ENCODE measurements at regions of chr3 and their contacts with region 1.

Region 1: GRCh38 chr3:40179016-40179415 is 130.5 kb upstream of the EIF1B start:
- DNase-seq: peak in 1 of 2 experiments; percentile 86
- H3K4me3 ChIP-seq: no peak overlapping the region
- H3K27ac ChIP-seq: no peak overlapping the region
- H3K4me1 ChIP-seq: 0 out of 7 replicates have a peak, but pooled peaks cover 0 to 2% (median 0%) of the 10 kb centered on the region in 4 experiments
- H3K27me3 ChIP-seq: no peaks in the 10 kb centered on the region; a peak in 1 of 7 replicates
- CTCF ChIP-seq: peak; percentile 50 to 78 (median 75)
- EP300 ChIP-seq: no peak
- POLR2A ChIP-seq: no peak
- RAD21 ChIP-seq: peak; percentile 80 to 83

Region 2: DNA sequence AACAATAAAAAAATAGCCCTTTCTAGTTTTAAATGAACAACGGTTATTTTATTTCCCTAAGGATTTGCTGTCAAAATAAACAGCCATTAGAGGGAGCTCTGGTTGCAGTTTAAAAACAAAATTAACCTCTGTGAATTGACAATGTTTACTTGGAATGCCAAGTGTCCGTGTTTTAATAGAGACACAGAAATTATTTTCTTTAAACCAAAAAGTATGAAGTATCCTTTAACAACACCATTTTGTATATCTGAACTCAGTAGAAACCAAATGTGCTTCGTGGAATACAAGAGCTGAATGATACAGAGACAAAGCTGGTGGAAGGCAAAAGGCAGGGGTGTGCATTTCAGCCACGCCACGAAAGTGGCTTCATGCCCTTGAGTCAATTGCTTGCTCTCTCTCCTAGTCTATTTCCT is 637.1 kb before region 1 on chr3:
- CTCF ChIA-PET with region 1: interaction called, 16 read pairs
- POLR2A ChIA-PET with region 1: no interaction called
- DNase-seq: no peak
- H3K4me3 ChIP-seq: no peak overlapping the region
- H3K27ac ChIP-seq: no peak overlapping the region
- H3K4me1 ChIP-seq: peaks cover 0 to 3% (median 1%) of the 10 kb centered on the region in 4 experiments; a peak in 3 of 7 replicates
- H3K27me3 ChIP-seq: no peaks in the 10 kb centered on the region
- CTCF ChIP-seq: peak in 2 of 3 experiments; percentile 40 to 48; a peak in 2 of 4 replicates
- EP300 ChIP-seq: no peak
- POLR2A ChIP-seq: no peak
- RAD21 ChIP-seq: peak; percentile 71 to 74

Region 3: DNA sequence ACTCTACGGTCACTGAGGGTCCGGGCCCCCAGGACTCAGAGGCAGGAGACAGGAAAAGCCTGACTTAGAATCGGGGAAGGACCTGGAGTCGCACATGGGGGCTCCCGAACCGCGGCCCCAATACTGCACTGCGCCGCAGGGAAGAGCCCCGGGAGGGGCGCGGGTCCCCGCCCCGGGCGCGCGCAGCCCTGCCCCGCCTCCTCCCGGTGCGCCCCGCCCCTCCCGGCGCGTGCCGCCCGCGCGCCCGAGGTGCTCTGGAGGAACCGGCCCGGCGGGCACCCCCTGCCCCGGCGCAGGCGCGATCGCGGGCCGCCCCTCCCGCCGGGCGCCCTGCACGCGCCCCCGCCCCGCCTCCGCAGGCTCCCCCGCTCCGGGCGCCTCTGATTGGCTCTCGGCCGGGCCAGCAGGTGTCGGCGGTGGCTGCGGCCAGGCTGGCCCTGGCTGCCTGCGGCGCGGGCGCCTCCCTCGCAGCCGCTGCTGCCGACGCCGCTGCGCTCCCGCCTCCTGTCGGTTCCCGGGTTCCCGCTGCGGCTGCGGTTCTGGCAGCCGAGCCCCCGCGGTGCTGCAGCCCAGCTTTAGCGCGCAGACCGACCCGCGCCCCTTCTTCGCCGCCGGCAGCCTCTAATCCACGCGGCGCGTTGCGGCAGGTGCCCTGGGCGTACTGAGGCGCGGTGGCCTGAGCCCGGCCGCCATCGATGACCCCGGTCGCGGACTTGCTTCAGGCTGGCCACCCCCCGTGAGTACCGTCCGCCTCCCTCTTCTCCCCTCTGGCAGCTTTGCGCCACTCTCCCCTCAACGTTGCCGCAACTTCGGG is 369.6 kb before region 1 on chr3 and contains the start of gene MYRIP:
- CTCF ChIA-PET with region 1: interaction called, 39 read pairs
- POLR2A ChIA-PET with region 1: no interaction called
- DNase-seq: peak in 1 of 2 experiments; percentile 78
- H3K4me3 ChIP-seq: peak within 1 kb of the TSS; percentile 57 to 70 (median 66)
- H3K27ac ChIP-seq: no peak within 1 kb of the TSS
- H3K4me1 ChIP-seq: peaks cover 0 to 3% (median 1%) of the 10 kb centered on the region in 4 experiments; a peak in 3 of 7 replicates
- H3K27me3 ChIP-seq: peaks cover 8 to 42% (median 30%) of the 10 kb centered on the region in 4 experiments
- CTCF ChIP-seq: no peak
- EP300 ChIP-seq: peak in 1 of 2 experiments; percentile 9; a peak in 1 of 3 replicates
- POLR2A ChIP-seq: no peak
- RAD21 ChIP-seq: no peak
- total RNA-seq, gene MYRIP: 3.4 and 4.3 TPM in 2 replicates

Region 4: DNA sequence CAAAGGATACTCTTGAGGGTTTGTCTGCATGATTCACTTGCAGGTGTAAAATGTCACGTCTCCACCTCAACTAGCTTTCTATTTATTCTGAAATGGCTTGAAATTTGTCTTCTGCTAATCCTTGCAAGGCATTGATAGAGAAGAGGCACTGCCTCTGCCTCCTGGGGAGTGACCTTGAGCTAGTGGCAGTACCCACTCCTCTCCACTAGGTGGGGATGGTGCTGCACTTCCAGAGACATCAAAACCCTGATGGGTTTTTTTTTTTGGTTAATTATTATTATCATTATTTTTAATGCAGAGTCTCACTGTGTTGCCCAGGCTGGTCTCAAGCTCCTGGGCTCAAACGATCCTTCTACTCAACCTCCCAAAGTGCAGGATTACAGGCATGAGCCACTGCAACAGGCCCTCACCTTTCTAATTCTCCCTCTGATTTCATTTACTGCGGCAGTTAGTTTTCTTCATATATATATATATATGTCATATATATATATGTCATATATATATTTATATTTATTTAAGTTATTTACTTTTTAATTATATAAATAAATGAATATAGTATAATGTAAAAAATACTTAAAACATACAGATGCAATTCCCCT is 12.9 kb after region 1 on chr3:
- CTCF ChIA-PET with region 1: interaction called, 114 read pairs
- POLR2A ChIA-PET with region 1: interaction called, 3 read pairs
- DNase-seq: peak in 1 of 2 experiments; percentile 86
- H3K4me3 ChIP-seq: no peak overlapping the region
- H3K27ac ChIP-seq: no peak overlapping the region
- H3K4me1 ChIP-seq: peaks cover 0 to 7% (median 6%) of the 10 kb centered on the region in 4 experiments; a peak in 4 of 7 replicates
- H3K27me3 ChIP-seq: no peaks in the 10 kb centered on the region
- CTCF ChIP-seq: peak; percentile 81 to 85 (median 83)
- EP300 ChIP-seq: no peak
- POLR2A ChIP-seq: no peak
- RAD21 ChIP-seq: peak; percentile 88 to 90

Region 5: DNA sequence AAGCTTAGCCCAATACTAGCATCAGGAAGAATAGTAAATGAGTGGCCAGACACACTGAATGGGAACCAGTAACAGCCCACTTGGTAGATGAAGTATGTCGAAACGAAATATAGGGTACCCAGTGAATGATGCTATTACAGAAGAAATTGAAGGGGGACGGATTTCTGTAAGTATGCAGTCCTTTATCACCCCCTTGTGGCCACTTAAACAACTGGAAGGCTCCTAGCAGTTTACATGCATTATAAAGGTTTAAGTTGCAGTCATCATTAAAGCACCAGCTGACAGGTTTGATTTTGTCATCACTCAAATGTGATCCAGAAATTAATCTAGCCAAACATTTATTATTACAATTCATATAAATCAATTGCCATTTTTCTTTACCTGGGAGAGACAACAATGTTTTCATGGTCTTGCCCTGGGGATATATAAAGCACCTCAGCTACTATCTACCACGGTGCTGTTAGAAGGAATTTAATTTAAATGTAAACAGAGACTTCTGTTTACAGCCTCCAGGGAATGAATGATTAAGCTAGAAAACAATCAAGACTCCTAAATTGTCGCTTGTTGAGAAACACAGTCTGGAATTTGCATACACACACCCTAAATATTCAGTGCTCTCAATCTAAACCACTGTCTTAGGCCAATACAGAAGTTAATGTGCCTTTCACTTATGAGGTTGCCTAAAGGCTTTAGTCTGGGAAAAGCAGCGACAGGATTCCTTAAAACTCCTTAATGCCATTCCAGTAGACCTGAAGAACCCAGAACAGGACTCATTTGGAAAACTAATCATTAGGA is 138.2 kb after region 1 on chr3:
- CTCF ChIA-PET with region 1: interaction called, 63 read pairs
- POLR2A ChIA-PET with region 1: interaction called, 3 read pairs
- DNase-seq: no peak
- H3K4me3 ChIP-seq: no peak overlapping the region
- H3K27ac ChIP-seq: no peak overlapping the region
- H3K4me1 ChIP-seq: no peaks in the 10 kb centered on the region
- H3K27me3 ChIP-seq: no peaks in the 10 kb centered on the region
- CTCF ChIP-seq: peak in 2 of 3 experiments; percentile 71 to 77; a peak in 3 of 4 replicates
- EP300 ChIP-seq: no peak
- POLR2A ChIP-seq: no peak
- RAD21 ChIP-seq: peak; percentile 89 to 90

Region 6: GRCh38 chr3:40713795-40714194 is 534.8 kb after region 1 on chr3:
- CTCF ChIA-PET with region 1: no interaction called
- POLR2A ChIA-PET with region 1: no interaction called
- DNase-seq: no peak
- H3K4me3 ChIP-seq: no peak overlapping the region
- H3K27ac ChIP-seq: no peak overlapping the region
- H3K4me1 ChIP-seq: no peaks in the 10 kb centered on the region
- H3K27me3 ChIP-seq: no peaks in the 10 kb centered on the region; a peak in 1 of 7 replicates
- CTCF ChIP-seq: no peak
- EP300 ChIP-seq: no peak
- POLR2A ChIP-seq: no peak
- RAD21 ChIP-seq: no peak